ENCODE measurements at regions of chr6 and their contacts with region 1.

Region 1: GRCh38 chr6:12605888-12606345 is 110.7 kb upstream of the PHACTR1 start:
- DNase-seq: peak; percentile 65
- ATAC-seq: peak; percentile 95
- H3K4me3 ChIP-seq: peak overlapping the region in 1 of 2 experiments; percentile 6; a peak in 1 of 4 replicates
- H3K27ac ChIP-seq: no peak overlapping the region
- H3K4me1 ChIP-seq: no peaks in the 10 kb centered on the region; a peak in 1 of 4 replicates
- H3K27me3 ChIP-seq: no peaks in the 10 kb centered on the region
- CTCF ChIP-seq: peak; percentile 58 to 82 (median 68); a peak in 5 of 6 replicates
- POLR2A ChIP-seq: no peak
- RAD21 ChIP-seq: peak; percentile 84

Region 2: GRCh38 chr6:11585426-11586016 is 1020.4 kb before region 1 on chr6:
- CTCF ChIA-PET with region 1: interaction called, 4 read pairs
- POLR2A ChIA-PET with region 1: no interaction called
- RAD21 ChIA-PET with region 1: no interaction called
- intact Hi-C with region 1: loop called (anchors 1 kb)
- DNase-seq: peak; percentile 44
- ATAC-seq: peak; percentile 63; the same call in 1 of the 2 replicates
- H3K4me3 ChIP-seq: no peak overlapping the region
- H3K27ac ChIP-seq: no peak overlapping the region
- H3K4me1 ChIP-seq: no peaks in the 10 kb centered on the region
- H3K27me3 ChIP-seq: no peaks in the 10 kb centered on the region
- CTCF ChIP-seq: peak; percentile 48 to 76 (median 71)
- POLR2A ChIP-seq: no peak
- RAD21 ChIP-seq: peak; percentile 75

Region 3: GRCh38 chr6:12150812-12151432 is 455.0 kb before region 1 on chr6:
- CTCF ChIA-PET with region 1: no interaction called
- POLR2A ChIA-PET with region 1: no interaction called
- RAD21 ChIA-PET with region 1: no interaction called
- intact Hi-C with region 1: loop called (anchors 1 kb)
- DNase-seq: peak; percentile 19
- ATAC-seq: peak; percentile 84
- H3K4me3 ChIP-seq: no peak overlapping the region
- H3K27ac ChIP-seq: no peak overlapping the region
- H3K4me1 ChIP-seq: peaks cover 0 to 10% of the 10 kb centered on the region in 2 experiments; a peak in 2 of 4 replicates
- H3K27me3 ChIP-seq: no peaks in the 10 kb centered on the region
- CTCF ChIP-seq: peak; percentile 66 to 89 (median 83)
- POLR2A ChIP-seq: no peak
- RAD21 ChIP-seq: peak; percentile 79